Left cardiac atrium (tissue), 4 donors: ENCODE measurements at regions of chr4 and their contacts with region 1.

Region 1: DNA sequence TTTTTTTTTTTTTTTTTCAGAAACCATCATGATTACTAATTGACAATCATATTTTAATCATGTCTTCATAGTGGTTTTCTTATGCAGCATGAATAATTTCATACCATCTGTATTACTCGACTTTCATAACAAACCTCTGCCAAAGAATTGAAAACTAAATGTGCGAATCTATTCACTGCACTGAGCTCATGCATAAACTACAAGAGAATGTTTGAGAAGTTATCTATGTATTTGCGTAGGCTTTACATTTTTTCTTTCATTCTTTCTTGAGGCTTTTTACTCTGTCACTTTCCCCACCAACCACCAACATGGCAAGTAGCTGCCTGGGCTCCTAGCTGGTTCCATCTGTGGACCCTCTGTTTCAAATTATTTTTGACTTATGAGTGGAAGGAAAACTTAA is 1761.0 kb downstream of the STIM2 start:
- DNase-seq: no peak
- ATAC-seq: no peak

Region 2: DNA sequence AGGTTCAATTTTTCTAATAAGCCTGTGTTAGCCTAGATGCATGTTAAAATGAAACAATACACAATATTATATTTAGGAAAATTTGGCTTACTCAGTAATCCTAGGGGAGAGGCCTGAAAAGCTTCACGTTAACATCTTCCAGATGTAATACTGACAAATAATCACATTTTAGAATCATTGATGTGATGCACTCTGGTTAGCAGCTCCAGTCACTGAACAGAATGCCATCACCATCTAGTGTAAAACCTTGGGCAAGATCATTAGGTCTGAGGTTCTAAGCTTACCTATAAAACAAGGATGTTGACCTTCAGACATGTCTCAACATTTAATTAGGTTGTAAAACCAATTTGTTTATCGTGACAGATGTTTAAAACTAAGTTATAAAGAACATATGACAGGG is 56.2 kb before region 1 on chr4:
- intact Hi-C with region 1: no loop called
- DNase-seq: no peak
- ATAC-seq: no peak

Region 3: DNA sequence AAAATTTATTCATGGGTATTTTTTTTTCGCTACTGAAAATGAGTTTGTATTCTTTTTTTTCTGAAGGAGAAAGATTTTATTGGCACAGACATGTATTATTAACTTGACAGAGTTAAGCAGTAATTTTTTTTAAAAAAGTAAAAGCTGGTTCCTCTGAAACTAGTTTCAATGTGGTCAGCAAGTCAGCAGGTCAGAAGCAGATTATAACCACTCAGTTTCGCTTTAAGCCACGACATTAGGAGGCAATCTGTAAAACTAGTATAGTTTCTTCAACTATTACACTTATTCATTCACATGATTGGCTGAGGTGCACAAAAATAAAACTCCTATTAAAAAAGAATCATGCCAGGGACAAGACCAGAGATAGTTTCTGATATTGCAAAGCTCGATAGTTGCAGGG is 1384.4 kb after region 1 on chr4:
- intact Hi-C with region 1: loop called in 1 of 2 experiments (anchors 10 kb)
- DNase-seq: no peak
- ATAC-seq: no peak